ENCODE measurements at regions of chr6 and their contacts with region 1.

Region 1: GRCh38 chr6:27177485-27178406 is 69.8 kb upstream of the PRSS16 start:
- H3K4me3 ChIP-seq: peak overlapping the region; percentile 92
- H3K27ac ChIP-seq: peak overlapping the region; percentile 85
- H3K4me1 ChIP-seq: no peaks in the 10 kb centered on the region
- CTCF ChIP-seq: peak; percentile 75; the same call in 1 of the 2 replicates

Region 2: DNA sequence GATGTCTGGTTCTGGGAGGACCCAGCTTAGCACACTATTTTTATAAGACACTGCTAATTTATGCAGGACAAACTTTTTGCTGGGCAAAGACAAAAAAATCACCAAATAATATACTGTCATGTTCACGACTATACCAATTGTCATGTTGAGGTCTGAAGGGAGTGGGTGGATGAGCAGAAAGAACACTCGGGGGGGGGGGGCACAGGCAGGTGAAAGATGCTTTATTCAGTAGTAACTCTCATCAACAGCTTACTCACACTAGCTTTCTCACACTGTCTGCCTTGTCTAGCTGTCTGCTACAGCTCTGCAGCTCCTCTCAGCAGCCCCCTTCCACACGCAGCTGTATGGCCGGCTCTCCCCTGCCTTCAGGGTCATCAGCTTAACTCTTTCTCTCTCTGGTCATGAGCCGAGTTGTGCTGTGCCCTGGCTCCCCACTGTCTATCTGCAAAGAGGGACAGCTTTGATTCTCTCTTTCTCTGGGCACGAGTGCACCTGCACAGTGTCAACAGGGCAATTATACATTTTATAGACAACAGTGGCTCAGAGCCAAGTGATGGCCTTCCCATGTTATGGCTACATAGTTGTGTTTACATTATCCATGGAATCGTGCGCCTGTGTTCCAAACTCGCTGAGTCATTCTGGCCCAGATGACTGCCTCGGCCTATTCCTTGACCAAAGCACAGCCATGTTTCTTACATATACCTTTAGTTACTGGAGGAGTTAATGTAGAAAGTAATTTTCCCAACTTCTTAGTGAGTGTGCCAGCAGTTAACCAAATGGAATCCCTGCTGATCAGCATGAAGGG is 117.9 kb before region 1 on chr6:
- CTCF ChIA-PET with region 1: no interaction called
- POLR2A ChIA-PET with region 1: no interaction called
- H3K4me3 ChIP-seq: no peak overlapping the region
- H3K27ac ChIP-seq: no peak overlapping the region
- H3K4me1 ChIP-seq: no peaks in the 10 kb centered on the region
- CTCF ChIP-seq: no peak

Region 3: DNA sequence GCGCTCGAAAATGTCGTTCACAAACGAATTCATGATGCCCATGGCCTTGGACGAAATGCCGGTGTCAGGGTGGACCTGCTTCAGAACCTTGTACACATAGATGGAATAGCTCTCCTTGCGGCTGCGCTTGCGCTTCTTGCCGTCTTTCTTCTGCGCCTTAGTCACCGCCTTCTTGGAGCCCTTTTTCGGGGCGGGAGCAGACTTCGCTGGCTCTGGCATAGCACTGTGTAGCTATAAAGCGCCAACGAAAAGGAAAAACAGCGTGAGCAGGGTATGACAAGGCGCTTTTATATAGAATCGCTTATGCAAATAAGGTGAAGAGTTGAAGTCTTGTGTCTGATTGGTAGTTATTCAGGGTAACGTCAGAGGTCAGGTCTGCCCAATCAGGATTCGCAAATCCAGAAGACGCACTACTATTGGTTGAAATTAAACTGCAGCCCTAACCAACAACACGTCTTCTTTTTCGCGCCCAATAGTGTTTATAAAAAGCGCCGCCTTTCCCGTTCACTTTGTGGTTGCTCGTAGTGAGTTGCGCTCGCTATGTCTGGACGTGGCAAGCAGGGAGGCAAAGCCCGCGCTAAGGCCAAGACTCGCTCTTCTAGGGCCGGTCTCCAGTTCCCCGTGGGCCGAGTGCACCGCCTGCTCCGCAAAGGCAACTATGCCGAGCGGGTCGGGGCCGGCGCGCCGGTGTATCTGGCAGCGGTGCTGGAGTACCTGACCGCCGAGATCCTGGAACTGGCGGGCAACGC is 45.0 kb before region 1 on chr6:
- CTCF ChIA-PET with region 1: no interaction called
- POLR2A ChIA-PET with region 1: interaction called, 10 read pairs
- H3K4me3 ChIP-seq: peak overlapping the region; percentile 71
- H3K27ac ChIP-seq: peak overlapping the region; percentile 95
- H3K4me1 ChIP-seq: peaks cover 10% of the 10 kb centered on the region
- CTCF ChIP-seq: no peak

Region 4: GRCh38 chr6:27157459-27158315 is 20.1 kb before region 1 on chr6:
- CTCF ChIA-PET with region 1: interaction called, 22 read pairs
- POLR2A ChIA-PET with region 1: interaction called, 4 read pairs
- H3K4me3 ChIP-seq: peak overlapping the region; percentile 65
- H3K27ac ChIP-seq: no peak overlapping the region; the same call in 1 of the 2 replicates
- H3K4me1 ChIP-seq: no peaks in the 10 kb centered on the region
- CTCF ChIP-seq: peak; percentile 55

Region 5: GRCh38 chr6:27188885-27189418 is 11.2 kb after region 1 on chr6:
- CTCF ChIA-PET with region 1: interaction called, 5 read pairs
- POLR2A ChIA-PET with region 1: interaction called, 11 read pairs
- H3K4me3 ChIP-seq: peak overlapping the region; percentile 71
- H3K27ac ChIP-seq: peak overlapping the region; percentile 21; the same call in 1 of the 2 replicates
- H3K4me1 ChIP-seq: no peaks in the 10 kb centered on the region
- CTCF ChIP-seq: peak; percentile 52; the same call in 1 of the 2 replicates

Region 6: DNA sequence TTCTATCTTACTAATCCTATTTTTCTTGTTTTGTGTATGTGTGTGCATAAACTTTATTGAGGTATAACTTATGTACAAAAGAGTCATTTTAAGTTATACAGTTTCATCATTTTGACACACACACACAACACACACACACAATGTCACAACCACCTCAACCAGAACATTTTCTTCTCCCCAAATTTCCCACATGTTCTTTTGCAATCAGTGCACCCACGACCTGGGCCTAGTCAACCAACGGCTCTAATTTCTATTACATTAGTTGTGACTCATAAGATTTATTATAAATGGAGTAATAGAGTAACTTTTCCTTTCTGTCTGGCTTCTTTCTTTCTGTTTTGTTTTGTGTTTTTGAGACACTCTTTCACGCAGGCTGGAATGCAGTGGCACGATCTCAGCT is 144.2 kb after region 1 on chr6:
- CTCF ChIA-PET with region 1: no interaction called
- POLR2A ChIA-PET with region 1: no interaction called
- H3K4me3 ChIP-seq: no peak overlapping the region
- H3K27ac ChIP-seq: no peak overlapping the region
- H3K4me1 ChIP-seq: no peaks in the 10 kb centered on the region
- CTCF ChIP-seq: no peak

Measured in HEK293 (cell line).